ENCODE measurements at regions of chr7 and their contacts with region 1.

Region 1: GRCh38 chr7:121366852-121367431 is 29.2 kb downstream of the FAM3C start:
- DNase-seq: peak; percentile 18
- ATAC-seq: no peak
- H3K4me3 ChIP-seq: no peak overlapping the region
- H3K27ac ChIP-seq: no peak overlapping the region
- H3K4me1 ChIP-seq: no peaks in the 10 kb centered on the region
- H3K27me3 ChIP-seq: no peaks in the 10 kb centered on the region
- CTCF ChIP-seq: peak; percentile 61
- EP300 ChIP-seq: no peak
- POLR2A ChIP-seq: no peak
- RAD21 ChIP-seq: 0 out of 2 replicates have a peak, but pooled peaks have one; percentile 31

Region 2: DNA sequence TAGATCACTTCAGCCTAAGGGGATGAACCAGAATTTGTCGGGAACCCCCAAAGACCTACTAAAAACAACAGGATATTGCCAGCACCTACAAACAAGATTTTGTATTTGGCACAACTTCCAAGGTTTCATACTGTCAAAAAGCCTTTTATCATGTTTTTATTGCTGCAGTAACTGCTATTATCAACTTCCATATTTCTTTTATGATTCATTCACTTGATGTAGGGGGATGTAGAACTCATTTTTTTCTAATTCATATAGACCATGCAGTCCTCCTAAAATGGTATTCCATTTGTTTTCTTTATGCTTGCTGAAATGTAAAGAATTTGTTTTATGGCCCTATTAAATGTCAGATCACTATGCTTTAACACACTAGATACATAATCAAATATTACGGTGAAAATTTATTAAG is 68.1 kb before region 1 on chr7:
- CTCF ChIA-PET with region 1: no interaction called
- POLR2A ChIA-PET with region 1: no interaction called
- in situ Hi-C with region 1: no loop called
- intact Hi-C with region 1: no loop called
- DNase-seq: no peak
- ATAC-seq: no peak
- H3K4me3 ChIP-seq: no peak overlapping the region
- H3K27ac ChIP-seq: no peak overlapping the region
- H3K4me1 ChIP-seq: no peaks in the 10 kb centered on the region
- H3K27me3 ChIP-seq: no peaks in the 10 kb centered on the region
- CTCF ChIP-seq: no peak
- EP300 ChIP-seq: no peak
- POLR2A ChIP-seq: no peak
- RAD21 ChIP-seq: no peak

Region 3: DNA sequence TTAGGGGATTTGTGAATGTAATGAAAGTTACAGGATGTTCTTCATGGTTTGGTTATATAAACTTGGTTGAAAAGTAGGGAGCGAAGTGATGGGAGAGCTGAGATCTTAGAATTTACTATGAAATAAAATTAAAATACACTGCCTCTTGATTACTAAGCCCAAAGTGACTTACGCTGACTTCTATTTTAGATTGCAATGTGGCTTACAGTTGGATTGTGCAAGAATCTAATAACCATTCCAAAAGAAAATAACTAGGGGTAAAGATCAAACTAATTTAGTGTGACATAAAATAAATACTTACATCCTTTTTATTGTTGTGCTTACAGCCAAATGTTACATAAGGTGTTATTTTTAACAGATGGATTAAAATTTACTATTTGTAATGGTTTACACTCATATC is 22.8 kb before region 1 on chr7:
- CTCF ChIA-PET with region 1: no interaction called
- POLR2A ChIA-PET with region 1: no interaction called
- in situ Hi-C with region 1: no loop called
- intact Hi-C with region 1: no loop called
- DNase-seq: no peak
- ATAC-seq: no peak
- H3K4me3 ChIP-seq: no peak overlapping the region
- H3K27ac ChIP-seq: no peak overlapping the region
- H3K4me1 ChIP-seq: no peaks in the 10 kb centered on the region
- H3K27me3 ChIP-seq: no peaks in the 10 kb centered on the region
- CTCF ChIP-seq: no peak
- EP300 ChIP-seq: no peak
- POLR2A ChIP-seq: no peak
- RAD21 ChIP-seq: no peak

Region 4: DNA sequence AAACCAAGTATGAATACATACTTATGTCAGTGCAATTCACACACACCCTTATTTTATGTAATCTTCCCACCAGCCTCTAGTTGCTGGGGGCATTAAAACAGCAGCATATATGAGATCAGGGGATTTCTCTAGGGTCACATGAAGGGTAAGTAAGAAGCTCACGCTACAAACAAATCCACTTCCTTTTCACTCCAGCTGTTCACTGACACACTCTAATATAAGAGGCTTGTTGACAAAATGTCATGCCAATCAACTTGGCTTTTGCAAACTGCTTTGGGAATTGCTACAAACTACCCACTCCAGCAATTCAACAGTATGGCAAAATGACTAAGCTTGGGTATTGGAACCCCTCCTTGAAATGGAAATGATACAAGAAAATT is 18.8 kb after region 1 on chr7:
- CTCF ChIA-PET with region 1: no interaction called
- POLR2A ChIA-PET with region 1: no interaction called
- in situ Hi-C with region 1: no loop called
- intact Hi-C with region 1: no loop called
- DNase-seq: no peak
- ATAC-seq: no peak
- H3K4me3 ChIP-seq: no peak overlapping the region
- H3K27ac ChIP-seq: no peak overlapping the region
- H3K4me1 ChIP-seq: peaks cover 7% of the 10 kb centered on the region; the same call in 1 of the 2 replicates
- H3K27me3 ChIP-seq: no peaks in the 10 kb centered on the region
- CTCF ChIP-seq: no peak
- EP300 ChIP-seq: no peak
- POLR2A ChIP-seq: no peak
- RAD21 ChIP-seq: no peak

Region 5: DNA sequence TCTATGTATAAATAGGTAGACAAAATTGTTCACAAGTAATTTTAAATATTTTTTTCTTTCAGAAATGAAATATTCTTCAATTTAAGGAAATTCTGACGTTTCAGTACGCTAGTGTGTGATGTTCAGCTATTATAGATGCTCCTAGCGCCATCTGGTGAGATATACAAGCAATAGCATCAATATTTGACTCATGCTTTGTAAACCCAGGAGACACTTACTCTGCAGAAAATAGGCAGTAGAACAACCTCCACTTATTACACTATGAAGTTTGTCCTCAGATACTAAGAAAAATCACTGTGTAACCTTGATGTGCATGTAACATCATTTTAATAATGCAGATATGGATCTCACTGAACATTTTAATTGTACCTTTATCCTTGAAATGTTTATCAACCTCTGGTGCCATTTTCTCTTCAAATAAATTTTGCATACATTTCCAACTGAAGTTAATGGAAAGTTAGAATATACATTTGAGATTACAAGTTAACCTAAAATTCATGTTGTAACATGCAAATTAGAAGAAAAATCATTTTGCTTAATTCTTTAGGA is 180.7 kb after region 1 on chr7:
- CTCF ChIA-PET with region 1: interaction called, 34 read pairs
- POLR2A ChIA-PET with region 1: no interaction called
- in situ Hi-C with region 1: loop called (anchors 5 kb)
- intact Hi-C with region 1: loop called (anchors 1 kb)
- DNase-seq: peak; percentile 44
- ATAC-seq: peak; percentile 84
- H3K4me3 ChIP-seq: no peak overlapping the region
- H3K27ac ChIP-seq: no peak overlapping the region
- H3K4me1 ChIP-seq: no peaks in the 10 kb centered on the region
- H3K27me3 ChIP-seq: no peaks in the 10 kb centered on the region
- CTCF ChIP-seq: peak; percentile 77
- EP300 ChIP-seq: no peak
- POLR2A ChIP-seq: no peak
- RAD21 ChIP-seq: no peak

Region 6: GRCh38 chr7:122006687-122007086 is 639.7 kb after region 1 on chr7:
- CTCF ChIA-PET with region 1: no interaction called
- POLR2A ChIA-PET with region 1: no interaction called
- in situ Hi-C with region 1: loop called (anchors 10 kb)
- intact Hi-C with region 1: no loop called
- DNase-seq: no peak
- ATAC-seq: no peak
- H3K4me3 ChIP-seq: no peak overlapping the region
- H3K27ac ChIP-seq: no peak overlapping the region
- H3K4me1 ChIP-seq: no peaks in the 10 kb centered on the region
- H3K27me3 ChIP-seq: no peaks in the 10 kb centered on the region
- CTCF ChIP-seq: no peak
- EP300 ChIP-seq: no peak
- POLR2A ChIP-seq: no peak
- RAD21 ChIP-seq: no peak